Motor neuron (in vitro differentiated cells): ENCODE measurements at regions of chr20 and their contacts with region 1.

Region 1: DNA sequence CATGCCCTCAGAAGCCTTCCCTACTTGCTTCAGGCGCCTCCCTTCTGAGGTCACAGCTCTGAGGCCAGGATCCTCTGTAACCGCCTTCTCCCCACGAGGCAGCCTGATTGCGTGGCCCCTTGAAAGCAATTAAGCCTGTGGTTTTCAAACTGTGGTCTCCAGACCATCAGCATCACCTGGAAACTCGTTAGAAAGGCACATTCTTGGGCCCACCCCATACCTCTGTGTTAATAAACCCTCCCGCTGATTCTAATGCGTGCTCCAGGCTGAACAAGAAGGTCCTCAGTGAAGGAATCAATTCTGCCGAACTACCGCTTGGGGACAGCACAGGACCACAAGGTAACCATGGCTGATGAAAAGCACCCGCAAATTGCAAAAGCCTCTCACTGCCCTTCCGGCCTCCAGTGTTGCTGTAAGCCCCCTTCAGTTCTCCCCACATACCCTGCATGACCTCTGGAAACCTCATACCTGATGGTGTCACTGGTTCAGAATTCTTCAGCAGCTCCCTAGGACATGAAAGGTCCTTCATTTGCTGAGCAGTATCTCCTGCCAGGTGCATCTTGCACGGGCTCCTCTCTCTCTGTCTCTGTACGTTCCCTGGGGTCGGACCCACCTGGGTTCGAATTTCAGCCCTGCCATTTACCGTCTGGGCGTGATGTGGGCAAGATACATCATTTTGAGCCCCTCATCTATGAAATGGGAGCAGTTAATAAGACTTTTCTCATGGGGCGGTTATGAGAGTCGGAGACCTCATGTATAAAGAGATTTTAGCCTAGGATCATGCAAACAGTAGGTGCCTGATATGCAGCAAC is 93.3 kb upstream of the RNF24 start:
- ATAC-seq: peak; percentile 86 to 96 (median 95)
- H3K4me3 ChIP-seq: no peak overlapping the region
- H3K27ac ChIP-seq: no peak overlapping the region
- H3K4me1 ChIP-seq: peaks cover 3 to 14% of the 10 kb centered on the region in 2 donors

Region 2: GRCh38 chr20:4174909-4175308 is 66.2 kb after region 1 on chr20:
- in situ Hi-C with region 1: loop called in 2 of 9 experiments (anchors 5 to 10 kb)
- ATAC-seq: no peak
- H3K4me3 ChIP-seq: no peak overlapping the region
- H3K27ac ChIP-seq: no peak overlapping the region
- H3K4me1 ChIP-seq: peaks cover 23 to 28% of the 10 kb centered on the region in 2 donors

Region 3: GRCh38 chr20:4187147-4187546 is 78.4 kb after region 1 on chr20:
- in situ Hi-C with region 1: loop called in 1 of 9 experiments (anchors 10 kb)
- ATAC-seq: peak in 1 of 8 experiments; percentile 24
- H3K4me3 ChIP-seq: no peak overlapping the region
- H3K27ac ChIP-seq: no peak overlapping the region
- H3K4me1 ChIP-seq: no peaks in the 10 kb centered on the region

Region 4: GRCh38 chr20:4592316-4593148 is 483.8 kb after region 1 on chr20:
- in situ Hi-C with region 1: loop called in 2 of 9 experiments (anchors 25 kb)
- ATAC-seq: peak; percentile 92 to 98 (median 96)
- H3K4me3 ChIP-seq: peak overlapping the region in 3 of 5 donors; percentile 19 to 29 (median 21)
- H3K27ac ChIP-seq: no peak overlapping the region
- H3K4me1 ChIP-seq: peaks cover 0 to 2% of the 10 kb centered on the region in 2 donors